Activated naive CD4-positive, alpha-beta T cell treated with anti-CD3 and anti-CD28 coated beads for 36 hours (primary cell): ENCODE measurements at regions of chrX and their contacts with region 1.

Region 1: DNA sequence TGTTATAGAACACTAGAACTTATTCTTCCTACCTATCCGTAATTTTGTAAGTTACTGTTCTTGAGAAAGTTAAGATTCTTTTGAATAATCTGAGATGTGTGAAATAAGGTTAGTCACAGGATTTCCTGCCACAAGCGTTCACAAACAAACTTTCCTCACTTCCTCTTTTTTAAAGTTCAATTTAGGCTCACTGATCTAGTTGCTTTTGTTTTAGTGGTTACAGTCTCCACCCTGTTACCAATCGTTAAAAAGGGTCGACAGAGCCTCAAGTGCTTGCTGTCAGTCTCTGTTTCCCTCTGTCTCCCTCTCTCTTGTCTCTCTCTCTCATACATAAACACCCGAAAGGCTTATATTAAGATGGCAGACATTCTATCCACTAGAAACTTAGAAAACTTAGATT is 35.9 kb upstream of the STK26 start:
- DNase-seq: peak; percentile 28
- H3K4me3 Mint-ChIP-seq: peak overlapping the region; percentile 20
- H3K27ac Mint-ChIP-seq: peak overlapping the region; percentile 94
- H3K4me1 Mint-ChIP-seq: peaks cover 48% of the 10 kb centered on the region
- H3K27me3 Mint-ChIP-seq: no peaks in the 10 kb centered on the region

Region 2: GRCh38 chrX:131894987-131895386 is 92.3 kb before region 1 on chrX:
- CTCF ChIA-PET with region 1: no interaction called
- intact Hi-C with region 1: loop called (anchors 5 kb)
- DNase-seq: no peak
- H3K4me3 Mint-ChIP-seq: no peak overlapping the region
- H3K27ac Mint-ChIP-seq: no peak overlapping the region
- H3K4me1 Mint-ChIP-seq: peaks cover 7% of the 10 kb centered on the region
- H3K27me3 Mint-ChIP-seq: no peaks in the 10 kb centered on the region

Region 3: DNA sequence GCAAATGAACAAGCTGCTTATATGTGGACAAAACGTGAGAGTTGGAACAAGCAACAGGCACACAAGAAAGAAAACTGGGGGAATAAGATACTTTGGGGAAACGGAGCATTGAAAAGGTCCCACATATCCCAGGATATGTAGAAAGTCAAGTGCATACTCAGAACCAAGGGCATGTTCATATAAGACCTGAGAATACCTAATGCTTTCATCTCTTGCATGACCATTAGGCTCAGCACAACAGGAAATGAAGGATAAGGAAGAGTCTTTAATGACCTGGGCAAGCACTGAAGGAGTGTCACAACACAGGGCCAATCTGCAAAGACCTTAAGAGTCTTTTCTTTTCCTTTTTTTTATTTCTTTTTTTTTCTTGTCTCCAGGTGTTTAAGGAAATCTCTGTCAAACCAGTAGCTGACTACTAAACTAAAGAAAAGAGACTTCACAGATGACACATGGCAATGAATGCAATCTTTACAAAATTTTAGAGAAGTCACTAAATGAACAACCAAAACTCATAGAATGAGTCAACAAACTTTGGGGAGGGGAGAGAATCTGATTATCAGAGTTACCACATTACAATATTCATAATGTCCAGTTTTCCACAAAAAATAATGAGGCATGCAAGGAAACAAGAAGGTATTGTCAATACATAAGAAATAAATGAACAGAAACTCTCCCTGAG is 32.0 kb before region 1 on chrX:
- CTCF ChIA-PET with region 1: no interaction called
- intact Hi-C with region 1: loop called (anchors 2 kb)
- DNase-seq: no peak
- H3K4me3 Mint-ChIP-seq: no peak overlapping the region
- H3K27ac Mint-ChIP-seq: no peak overlapping the region
- H3K4me1 Mint-ChIP-seq: peaks cover 9% of the 10 kb centered on the region
- H3K27me3 Mint-ChIP-seq: no peaks in the 10 kb centered on the region

Region 4: DNA sequence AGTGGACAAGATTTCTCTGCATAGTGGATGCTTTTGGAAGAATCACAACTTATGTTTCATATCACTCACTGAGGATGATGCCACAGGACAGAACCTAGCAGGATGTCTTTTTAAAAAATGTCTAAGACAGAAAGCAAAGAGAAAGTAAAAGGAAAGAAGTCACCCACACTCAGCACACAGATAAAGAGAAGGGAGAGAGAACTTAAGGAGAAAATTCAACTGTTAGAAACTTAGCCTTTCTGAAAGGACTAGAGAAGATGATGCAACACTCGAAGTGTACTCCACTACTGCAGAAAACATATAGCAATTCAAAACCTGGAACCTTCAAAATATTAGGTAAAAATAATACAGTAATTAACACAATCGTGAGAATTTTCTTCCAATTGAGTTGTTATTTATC is 16.9 kb before region 1 on chrX:
- CTCF ChIA-PET with region 1: no interaction called
- intact Hi-C with region 1: loop called (anchors 2 kb)
- DNase-seq: no peak
- H3K4me3 Mint-ChIP-seq: peak overlapping the region; percentile 50
- H3K27ac Mint-ChIP-seq: peak overlapping the region; percentile 72
- H3K4me1 Mint-ChIP-seq: peaks cover 4% of the 10 kb centered on the region
- H3K27me3 Mint-ChIP-seq: no peaks in the 10 kb centered on the region

Region 5: DNA sequence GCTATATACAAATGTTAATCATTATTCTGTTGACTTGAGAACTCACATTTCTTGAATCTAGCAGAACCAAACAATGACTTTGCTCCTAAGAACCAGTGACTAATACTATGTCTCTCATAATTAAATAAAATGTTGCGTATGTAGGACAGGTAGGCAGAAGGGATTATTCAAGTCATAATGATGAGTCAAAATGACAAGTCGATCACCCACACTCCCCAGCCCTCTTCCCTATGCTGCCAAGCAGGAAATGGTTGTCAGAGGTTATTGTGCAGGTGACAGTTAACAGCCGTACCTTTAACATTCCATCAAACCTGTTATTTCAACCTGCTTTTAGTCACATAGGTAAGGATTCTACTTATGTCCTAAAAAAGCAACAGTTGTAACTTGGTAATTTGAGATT is 13.9 kb after region 1 on chrX:
- CTCF ChIA-PET with region 1: interaction called, 3 read pairs
- intact Hi-C with region 1: loop called (anchors 1 kb)
- DNase-seq: peak; percentile 60
- H3K4me3 Mint-ChIP-seq: no peak overlapping the region
- H3K27ac Mint-ChIP-seq: no peak overlapping the region
- H3K4me1 Mint-ChIP-seq: peaks cover 26% of the 10 kb centered on the region
- H3K27me3 Mint-ChIP-seq: no peaks in the 10 kb centered on the region

Region 6: GRCh38 chrX:132034648-132035047 is 47.4 kb after region 1 on chrX:
- CTCF ChIA-PET with region 1: no interaction called
- intact Hi-C with region 1: no loop called
- DNase-seq: no peak
- H3K4me3 Mint-ChIP-seq: no peak overlapping the region
- H3K27ac Mint-ChIP-seq: no peak overlapping the region
- H3K4me1 Mint-ChIP-seq: peaks cover 59% of the 10 kb centered on the region
- H3K27me3 Mint-ChIP-seq: no peaks in the 10 kb centered on the region